Mammary epithelial cell (primary cell): ENCODE measurements at regions of chr10 and their contacts with region 1.

Region 1: DNA sequence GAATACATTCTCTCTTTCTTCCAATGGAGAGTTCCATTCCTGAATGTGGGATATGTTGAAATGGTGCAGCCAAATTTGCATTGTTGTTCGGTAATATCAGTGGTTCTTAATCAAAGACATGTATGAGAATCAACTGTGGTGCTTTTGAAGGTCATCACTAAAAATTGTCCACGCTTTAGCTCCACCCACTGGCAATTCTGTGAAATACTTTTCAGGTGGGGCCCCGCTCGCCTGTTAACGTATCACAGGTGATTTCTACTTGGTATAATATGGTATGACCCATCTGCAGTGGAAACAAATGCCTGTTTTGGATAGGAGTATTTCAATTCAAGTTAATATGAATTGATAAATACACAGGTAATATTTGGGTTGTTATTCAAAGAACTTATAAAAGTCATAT is 178.4 kb downstream of the NSUN6 start:
- DNase-seq: no peak
- H3K4me3 ChIP-seq: no peak overlapping the region
- H3K27ac ChIP-seq: no peak overlapping the region
- H3K4me1 ChIP-seq: no peaks in the 10 kb centered on the region
- H3K27me3 ChIP-seq: no peaks in the 10 kb centered on the region
- CTCF ChIP-seq: no peak

Region 2: GRCh38 chr10:18409599-18410397 is 63.2 kb before region 1 on chr10:
- CTCF ChIA-PET with region 1: no interaction called
- dilution Hi-C with region 1: no loop called
- in situ Hi-C with region 1: no loop called
- intact Hi-C with region 1: no loop called
- DNase-seq: no peak
- H3K4me3 ChIP-seq: no peak overlapping the region
- H3K27ac ChIP-seq: no peak overlapping the region
- H3K4me1 ChIP-seq: no peaks in the 10 kb centered on the region
- H3K27me3 ChIP-seq: no peaks in the 10 kb centered on the region
- CTCF ChIP-seq: no peak

Region 3: GRCh38 chr10:18505456-18506118 is 32.6 kb after region 1 on chr10:
- CTCF ChIA-PET with region 1: no interaction called
- dilution Hi-C with region 1: no loop called
- in situ Hi-C with region 1: no loop called
- intact Hi-C with region 1: no loop called
- DNase-seq: no peak
- H3K4me3 ChIP-seq: no peak overlapping the region
- H3K27ac ChIP-seq: no peak overlapping the region
- H3K4me1 ChIP-seq: no peaks in the 10 kb centered on the region
- H3K27me3 ChIP-seq: no peaks in the 10 kb centered on the region
- CTCF ChIP-seq: no peak

Region 4: DNA sequence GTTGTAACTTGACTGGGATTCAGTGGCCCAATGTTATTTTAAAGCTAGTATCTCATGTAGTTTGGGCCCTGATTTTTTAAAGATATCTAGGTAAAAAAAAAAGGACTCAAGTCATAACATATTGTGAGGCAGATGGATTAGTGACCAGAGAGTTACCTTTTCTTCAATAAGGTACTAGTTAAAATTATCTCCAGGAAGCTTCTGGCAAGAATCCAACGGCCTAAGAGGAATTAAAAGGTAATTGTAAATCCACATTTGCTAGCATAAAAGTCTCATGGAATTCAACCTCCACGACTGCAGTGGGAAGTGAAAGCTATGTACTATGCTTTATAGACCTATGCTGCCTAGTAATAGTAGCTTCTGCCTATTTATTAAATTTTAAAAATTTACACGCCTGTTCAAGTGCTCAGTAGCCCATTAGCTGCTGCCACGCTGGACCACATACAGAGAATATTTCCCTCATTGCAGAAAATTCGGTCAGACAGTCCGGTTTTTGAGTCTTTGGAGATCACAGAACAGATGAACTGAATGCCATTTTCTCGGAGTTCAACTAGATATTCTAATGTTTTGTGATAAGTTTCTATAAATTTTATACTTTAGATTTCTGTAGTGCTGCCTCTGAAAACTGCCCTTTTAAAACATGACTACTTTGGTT is 60.0 kb after region 1 on chr10:
- CTCF ChIA-PET with region 1: no interaction called
- dilution Hi-C with region 1: loop called (anchors 5 kb)
- in situ Hi-C with region 1: no loop called
- intact Hi-C with region 1: no loop called
- DNase-seq: no peak
- H3K4me3 ChIP-seq: no peak overlapping the region
- H3K27ac ChIP-seq: no peak overlapping the region
- H3K4me1 ChIP-seq: no peaks in the 10 kb centered on the region
- H3K27me3 ChIP-seq: no peaks in the 10 kb centered on the region
- CTCF ChIP-seq: no peak